Right cardiac atrium (tissue), 5 donors: ENCODE measurements at regions of chr1 and their contacts with region 1.

Region 1: DNA sequence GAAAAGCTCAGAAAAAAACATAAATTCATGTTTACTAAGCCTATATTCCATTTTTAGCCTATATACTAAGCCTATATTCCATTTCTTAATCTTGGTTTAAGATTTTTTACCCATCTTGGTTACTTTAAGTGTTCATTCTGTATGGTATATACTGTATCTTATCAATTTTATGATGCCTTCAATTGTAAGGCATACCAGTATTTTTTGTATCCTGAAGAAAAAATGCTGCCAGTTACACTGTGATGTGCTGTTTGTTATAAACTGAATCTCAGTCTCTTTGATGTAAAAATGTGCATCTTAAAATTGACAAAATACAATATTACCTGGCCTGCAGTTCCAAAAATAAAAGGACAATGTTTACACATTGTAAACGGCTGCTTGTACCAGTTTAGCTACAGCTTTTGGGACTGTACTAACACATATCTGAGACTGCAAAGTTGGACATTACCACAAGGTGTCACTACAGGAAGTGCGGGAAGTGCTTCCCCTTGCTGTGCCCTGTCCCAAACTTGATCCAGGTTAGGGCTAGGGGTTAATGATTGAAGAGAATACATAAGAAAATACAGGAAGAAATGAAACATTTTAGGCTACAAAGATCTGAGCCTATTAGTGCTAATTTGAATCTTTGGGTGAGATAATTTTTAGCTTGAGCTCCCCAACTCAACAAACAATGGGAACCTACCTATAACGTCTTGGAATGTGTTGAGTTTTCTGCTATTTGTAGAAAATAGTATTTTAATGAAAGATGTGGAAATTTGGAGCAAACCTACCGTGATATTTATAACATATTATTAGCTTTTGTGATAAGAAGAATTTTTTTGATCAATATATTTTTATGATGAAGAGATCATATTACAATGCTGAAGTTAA is 108.9 kb downstream of the LBR start:
- DNase-seq: no peak
- ATAC-seq: peak; percentile 61 to 80
- H3K4me3 ChIP-seq: no peak overlapping the region
- H3K27ac ChIP-seq: no peak overlapping the region
- H3K4me1 ChIP-seq: no peaks in the 10 kb centered on the region
- H3K27me3 ChIP-seq: no peaks in the 10 kb centered on the region

Region 2: DNA sequence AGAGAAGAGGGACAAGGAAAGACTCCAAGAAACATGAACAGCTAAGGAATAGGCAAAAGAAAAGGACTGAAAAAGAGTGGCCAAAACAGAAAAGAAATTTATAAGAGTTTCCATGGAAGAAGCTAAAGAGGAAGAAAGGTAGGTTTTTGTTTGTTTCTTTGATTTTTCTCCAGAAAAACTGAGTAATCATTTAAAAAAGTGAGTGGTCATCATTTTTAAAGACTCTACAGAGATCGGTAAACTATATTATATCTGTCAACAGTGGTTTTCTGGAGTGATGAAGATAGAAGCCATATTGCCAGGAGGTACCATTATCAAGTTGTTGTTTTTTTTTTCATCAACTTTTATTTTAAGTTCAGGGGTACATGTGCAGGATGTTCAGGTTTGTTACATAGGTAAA is 187.1 kb before region 1 on chr1:
- intact Hi-C with region 1: no loop called
- DNase-seq: no peak
- ATAC-seq: no peak
- H3K4me3 ChIP-seq: no peak overlapping the region
- H3K27ac ChIP-seq: no peak overlapping the region
- H3K4me1 ChIP-seq: no peaks in the 10 kb centered on the region
- H3K27me3 ChIP-seq: no peaks in the 10 kb centered on the region

Region 3: DNA sequence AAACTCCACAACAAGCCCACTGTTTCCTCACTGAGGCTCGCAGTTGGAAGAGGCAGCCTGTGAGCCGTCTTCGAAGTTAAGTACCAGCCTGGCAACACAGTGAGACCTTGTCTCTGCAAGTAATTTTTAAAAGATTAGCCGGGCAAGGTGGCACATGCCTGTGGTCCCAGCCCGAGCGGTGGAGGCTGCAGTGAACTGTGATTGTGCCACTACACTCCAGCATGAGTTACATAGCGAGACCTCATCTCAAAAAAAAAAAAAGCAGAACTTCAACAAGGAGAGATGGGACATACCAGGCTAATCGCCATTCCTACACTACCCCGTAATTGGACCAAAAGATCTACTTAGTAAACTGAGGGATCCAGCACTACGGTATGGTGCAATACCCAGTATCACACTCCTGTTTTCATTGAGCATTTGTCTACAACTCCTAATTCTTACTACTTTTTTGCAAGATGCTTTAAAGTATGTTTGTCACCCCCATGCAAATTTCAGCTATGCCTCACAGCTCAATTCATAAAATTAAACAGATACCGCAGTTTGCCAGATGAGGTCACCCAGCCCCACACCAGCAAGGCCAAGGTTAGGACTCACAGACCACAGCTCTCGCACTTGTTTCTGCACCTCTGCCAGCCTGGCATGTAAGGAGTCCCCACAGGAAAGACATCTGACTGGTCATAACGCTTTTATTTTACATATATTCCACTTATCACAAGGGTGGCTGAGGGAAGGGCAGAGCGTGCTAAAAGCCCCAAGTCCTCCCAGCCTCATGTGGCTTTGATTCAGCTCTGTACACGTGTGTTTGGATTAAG is 659.2 kb after region 1 on chr1:
- intact Hi-C with region 1: loop called in 2 of 4 experiments (anchors 10 kb)
- DNase-seq: no peak
- ATAC-seq: no peak
- H3K4me3 ChIP-seq: no peak overlapping the region
- H3K27ac ChIP-seq: no peak overlapping the region
- H3K4me1 ChIP-seq: no peaks in the 10 kb centered on the region
- H3K27me3 ChIP-seq: no peaks in the 10 kb centered on the region